ENCODE measurements at regions of chr17 and their contacts with region 1.

Region 1: GRCh38 chr17:8248751-8249607 is at the start of gene PFAS:
- DNase-seq: peak; percentile 97
- H3K4me3 Mint-ChIP-seq: peak within 1 kb of the TSS; percentile 99
- H3K27ac Mint-ChIP-seq: peak within 1 kb of the TSS; percentile 100
- H3K4me1 Mint-ChIP-seq: peaks cover 37% of the 10 kb centered on the region
- H3K27me3 Mint-ChIP-seq: no peaks in the 10 kb centered on the region
- total RNA-seq, gene PFAS: 106 to 110 TPM

Region 2: DNA sequence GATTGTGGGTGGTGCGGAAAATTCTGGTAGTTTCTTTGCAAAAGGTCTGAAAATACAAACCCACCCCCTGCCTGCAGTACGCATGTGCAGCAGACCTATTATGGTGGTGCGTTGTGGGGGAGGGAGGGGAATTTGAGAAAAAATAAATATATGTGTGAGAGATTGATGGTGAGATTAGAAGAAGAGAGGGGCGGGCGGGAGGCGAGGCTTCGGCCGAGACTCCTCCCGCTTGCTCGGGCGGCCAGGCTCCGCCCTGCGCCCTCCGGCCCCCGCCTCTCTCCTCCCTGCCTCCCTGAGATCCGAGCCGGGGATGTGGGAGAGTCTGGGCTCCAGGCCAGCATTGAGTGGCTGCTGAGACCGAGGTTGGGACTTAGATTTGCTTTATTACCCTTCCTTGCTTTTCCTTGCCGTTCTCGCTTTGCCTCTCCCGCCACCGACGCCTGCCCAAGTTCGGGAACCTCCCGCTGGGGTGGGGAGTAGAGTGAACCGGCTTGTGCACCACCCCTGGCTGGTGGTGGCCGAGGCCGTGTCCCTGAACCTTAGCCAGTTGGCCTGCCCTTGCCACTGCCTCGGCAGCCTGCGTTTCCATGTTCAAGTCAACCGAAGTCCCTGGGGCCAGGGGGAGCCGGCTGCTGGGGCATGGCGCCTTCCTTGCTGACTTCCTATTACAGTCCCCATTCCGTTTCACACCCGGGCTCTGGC is 361.3 kb before region 1 on chr17:
- CTCF ChIA-PET with region 1: no interaction called
- intact Hi-C with region 1: loop called (anchors 1 kb)
- DNase-seq: peak; percentile 96
- H3K4me3 Mint-ChIP-seq: no peak overlapping the region
- H3K27ac Mint-ChIP-seq: no peak overlapping the region
- H3K4me1 Mint-ChIP-seq: peaks cover 5% of the 10 kb centered on the region
- H3K27me3 Mint-ChIP-seq: no peaks in the 10 kb centered on the region

Region 3: GRCh38 chr17:8138672-8139371 is 110.2 kb before region 1 on chr17:
- CTCF ChIA-PET with region 1: interaction called, 3 read pairs
- intact Hi-C with region 1: loop called (anchors 1 kb)
- DNase-seq: peak; percentile 98
- H3K4me3 Mint-ChIP-seq: no peak overlapping the region
- H3K27ac Mint-ChIP-seq: no peak overlapping the region
- H3K4me1 Mint-ChIP-seq: peaks cover 13% of the 10 kb centered on the region
- H3K27me3 Mint-ChIP-seq: no peaks in the 10 kb centered on the region

Region 4: GRCh38 chr17:8277317-8277716 is 28.3 kb after region 1 on chr17:
- CTCF ChIA-PET with region 1: no interaction called
- intact Hi-C with region 1: no loop called
- DNase-seq: no peak
- H3K4me3 Mint-ChIP-seq: no peak overlapping the region
- H3K27ac Mint-ChIP-seq: no peak overlapping the region
- H3K4me1 Mint-ChIP-seq: peaks cover 2% of the 10 kb centered on the region
- H3K27me3 Mint-ChIP-seq: no peaks in the 10 kb centered on the region

Region 5: DNA sequence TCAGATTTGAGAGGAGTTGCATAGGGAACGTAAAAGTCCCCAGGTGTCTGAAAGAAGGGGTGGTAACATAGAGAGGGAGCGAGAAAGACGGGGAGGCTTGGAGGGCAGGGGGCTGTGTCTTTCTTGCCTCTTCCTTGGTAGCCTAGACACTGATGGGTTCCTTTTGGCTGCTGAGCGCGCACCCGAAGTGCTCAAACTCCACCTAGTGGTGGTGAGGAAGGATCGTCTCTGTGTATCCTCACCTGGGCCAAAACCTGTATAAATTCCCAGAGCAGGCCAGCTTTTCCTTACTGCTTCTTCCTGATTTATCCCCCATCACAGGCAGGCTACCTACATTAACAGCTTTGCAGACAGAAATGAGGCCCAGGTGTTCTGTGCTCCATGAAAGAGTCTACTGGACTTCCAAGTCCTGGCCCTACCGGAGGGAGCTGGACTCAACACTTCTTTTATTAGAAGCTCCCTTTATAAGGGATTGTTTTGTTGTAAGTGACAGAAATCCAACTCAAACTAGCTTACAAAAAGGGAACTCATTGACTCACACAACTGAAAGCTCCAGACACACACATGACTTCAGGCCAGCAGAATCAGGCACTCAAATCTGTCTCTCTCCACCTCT is 51.8 kb after region 1 on chr17:
- CTCF ChIA-PET with region 1: interaction called, 10 read pairs
- intact Hi-C with region 1: loop called (anchors 1 kb)
- DNase-seq: peak; percentile 67
- H3K4me3 Mint-ChIP-seq: no peak overlapping the region
- H3K27ac Mint-ChIP-seq: no peak overlapping the region
- H3K4me1 Mint-ChIP-seq: peaks cover 7% of the 10 kb centered on the region
- H3K27me3 Mint-ChIP-seq: no peaks in the 10 kb centered on the region

Region 6: GRCh38 chr17:8745586-8746500 is 496.9 kb after region 1 on chr17:
- CTCF ChIA-PET with region 1: interaction called, 3 read pairs
- intact Hi-C with region 1: loop called (anchors 1 kb)
- DNase-seq: peak; percentile 74
- H3K4me3 Mint-ChIP-seq: peak overlapping the region; percentile 81
- H3K27ac Mint-ChIP-seq: peak overlapping the region; percentile 53
- H3K4me1 Mint-ChIP-seq: peaks cover 8% of the 10 kb centered on the region
- H3K27me3 Mint-ChIP-seq: no peaks in the 10 kb centered on the region